Aorta (tissue), 5 donors: ENCODE measurements at regions of chr1 and their contacts with region 1.

Region 1: DNA sequence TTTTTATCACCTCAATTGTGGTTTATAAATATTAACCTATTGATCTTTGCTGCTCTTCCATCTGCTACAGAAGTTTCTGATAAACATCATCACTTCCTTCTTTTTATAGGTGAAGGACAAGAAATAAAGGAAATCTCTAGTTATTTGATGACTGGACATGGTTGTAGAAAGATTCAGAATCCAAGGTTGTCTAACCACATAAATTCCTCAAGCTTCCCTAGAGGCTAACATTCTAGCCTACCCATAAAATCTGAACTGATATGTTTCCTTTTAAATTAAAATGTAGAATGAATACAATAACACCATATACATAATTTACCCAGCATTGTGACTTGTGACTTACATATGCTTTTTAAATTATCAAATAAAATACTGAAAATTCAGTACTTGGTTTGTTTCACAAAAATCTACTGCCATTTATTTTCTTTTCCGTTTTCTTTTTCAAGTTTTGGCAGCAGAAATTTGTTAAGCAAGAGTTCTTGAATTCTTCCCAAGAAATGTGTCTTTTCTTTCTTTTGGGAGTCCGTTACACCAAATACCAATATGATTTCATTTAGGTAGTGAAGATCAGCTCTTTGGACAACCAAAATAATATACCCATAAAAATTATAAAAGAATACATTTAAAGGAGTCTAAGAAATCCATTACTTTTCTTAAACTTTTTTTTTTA is 513.2 kb upstream of the ADGRL2 start:
- DNase-seq: no peak
- ATAC-seq: no peak
- H3K4me3 ChIP-seq: no peak overlapping the region
- H3K27ac ChIP-seq: no peak overlapping the region
- H3K4me1 ChIP-seq: no peaks in the 10 kb centered on the region
- H3K27me3 ChIP-seq: no peaks in the 10 kb centered on the region

Region 2: GRCh38 chr1:82269431-82269830 is 981.9 kb after region 1 on chr1:
- intact Hi-C with region 1: loop called in 1 of 2 experiments (anchors 10 kb)
- DNase-seq: peak in 1 of 2 donors; percentile 47
- ATAC-seq: peak; percentile 78
- H3K4me3 ChIP-seq: no peak overlapping the region
- H3K27ac ChIP-seq: no peak overlapping the region
- H3K4me1 ChIP-seq: no peaks in the 10 kb centered on the region
- H3K27me3 ChIP-seq: no peaks in the 10 kb centered on the region